Ovary (tissue), 10 donors: ENCODE measurements at regions of chr9 and their contacts with region 1.

Region 1: GRCh38 chr9:111037381-111038305 is 627 bp downstream of the LPAR1 start:
- DNase-seq: peak; percentile 39 to 69 (median 49)
- H3K4me3 ChIP-seq: peak overlapping the region; percentile 57
- H3K27ac ChIP-seq: peak overlapping the region; percentile 74 to 89
- H3K4me1 ChIP-seq: peaks cover 8% of the 10 kb centered on the region
- H3K27me3 ChIP-seq: no peaks in the 10 kb centered on the region
- CTCF ChIP-seq: no peak
- EP300 ChIP-seq: no peak
- POLR2A ChIP-seq: no peak

Region 2: GRCh38 chr9:110977259-110977709 is 60.4 kb before region 1 on chr9:
- intact Hi-C with region 1: loop called in 1 of 4 experiments (anchors 5 kb)
- DNase-seq: peak in 1 of 5 donors; percentile 10
- H3K4me3 ChIP-seq: no peak overlapping the region
- H3K27ac ChIP-seq: no peak overlapping the region
- H3K4me1 ChIP-seq: peaks cover 4% of the 10 kb centered on the region
- H3K27me3 ChIP-seq: no peaks in the 10 kb centered on the region
- CTCF ChIP-seq: no peak
- EP300 ChIP-seq: no peak
- POLR2A ChIP-seq: no peak